ENCODE measurements at regions of chr13 and their contacts with region 1.

Region 1: GRCh38 chr13:46975173-46975572 is 78.3 kb upstream of the HTR2A start:
- DNase-seq: no peak
- H3K4me3 ChIP-seq: no peak overlapping the region
- H3K27ac ChIP-seq: no peak overlapping the region
- H3K27me3 ChIP-seq: no peaks in the 10 kb centered on the region
- CTCF ChIP-seq: no peak

Region 2: GRCh38 chr13:46961719-46962118 is 13.5 kb before region 1 on chr13:
- CTCF ChIA-PET with region 1: interaction called, 37 read pairs
- POLR2A ChIA-PET with region 1: no interaction called
- DNase-seq: no peak
- H3K4me3 ChIP-seq: no peak overlapping the region
- H3K27ac ChIP-seq: no peak overlapping the region
- H3K27me3 ChIP-seq: no peaks in the 10 kb centered on the region
- CTCF ChIP-seq: no peak

Region 3: DNA sequence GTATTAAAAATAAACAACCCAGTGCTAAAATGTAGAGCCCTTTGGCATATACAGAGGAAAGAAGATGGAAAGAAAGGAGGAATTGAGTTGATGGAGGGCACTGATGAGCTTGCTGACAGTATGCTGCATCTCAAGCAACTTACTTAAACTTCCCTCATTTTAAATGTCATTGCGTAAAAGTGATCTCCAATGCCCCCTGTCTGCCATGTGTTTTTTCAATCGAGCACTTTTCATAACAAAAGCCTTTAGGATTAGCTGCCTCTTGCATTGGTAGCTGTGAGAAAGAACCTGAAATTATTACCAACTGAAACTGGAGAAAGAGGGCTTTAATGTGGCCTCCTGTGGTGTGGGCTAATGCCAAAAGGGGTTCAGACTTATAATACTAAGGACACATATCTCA is 484.3 kb after region 1 on chr13:
- CTCF ChIA-PET with region 1: interaction called, 20 read pairs
- POLR2A ChIA-PET with region 1: no interaction called
- DNase-seq: no peak
- H3K4me3 ChIP-seq: no peak overlapping the region
- H3K27ac ChIP-seq: no peak overlapping the region
- H3K27me3 ChIP-seq: no peaks in the 10 kb centered on the region
- CTCF ChIP-seq: peak; percentile 51

Region 4: DNA sequence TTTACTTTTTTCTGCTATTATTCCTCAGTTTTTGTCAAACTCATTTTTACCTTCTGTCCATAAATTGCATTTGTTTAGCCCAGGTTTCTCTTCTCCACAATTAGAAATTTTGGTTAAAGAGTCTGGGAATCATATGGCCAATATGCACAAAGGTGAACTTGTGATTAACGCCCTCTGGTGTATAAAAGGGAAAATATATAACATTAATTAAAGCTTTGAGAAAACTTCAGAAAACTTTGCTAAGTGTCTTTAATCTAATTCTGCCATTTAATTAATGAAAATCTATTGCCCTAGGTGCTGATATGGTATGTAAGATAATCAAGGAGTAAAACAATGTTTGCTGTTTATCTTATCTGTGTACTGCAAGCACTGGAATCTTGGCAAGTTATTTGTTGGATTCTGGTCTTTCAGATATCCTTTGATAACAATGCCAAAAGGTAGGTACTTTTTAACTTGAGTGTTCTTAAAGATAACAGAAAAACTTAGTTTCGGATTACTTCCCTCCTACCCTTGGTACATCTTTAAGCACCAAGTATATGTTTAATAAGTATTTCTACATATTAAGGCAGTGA is 623.3 kb after region 1 on chr13:
- CTCF ChIA-PET with region 1: interaction called, 13 read pairs
- POLR2A ChIA-PET with region 1: no interaction called
- DNase-seq: no peak
- H3K4me3 ChIP-seq: no peak overlapping the region
- H3K27ac ChIP-seq: no peak overlapping the region
- H3K27me3 ChIP-seq: no peaks in the 10 kb centered on the region
- CTCF ChIP-seq: peak; percentile 37

Measured in AG04450 (cell line).